ENCODE measurements at regions of chr18 and their contacts with region 1.

Region 1: GRCh38 chr18:62522504-62523254 is at the start of gene ZCCHC2:
- DNase-seq: peak; percentile 88 to 96
- H3K4me3 ChIP-seq: peak within 1 kb of the TSS; percentile 95
- H3K27ac ChIP-seq: peak within 1 kb of the TSS; percentile 53
- H3K4me1 ChIP-seq: peaks cover 30% of the 10 kb centered on the region
- H3K27me3 ChIP-seq: no peaks in the 10 kb centered on the region
- CTCF ChIP-seq: no peak
- total RNA-seq, gene ZCCHC2: 12.0 and 18.1 TPM in 2 replicates

Region 2: GRCh38 chr18:62152844-62153243 is 369.8 kb before region 1 on chr18:
- CTCF ChIA-PET with region 1: no interaction called
- POLR2A ChIA-PET with region 1: no interaction called
- intact Hi-C with region 1: no loop called
- DNase-seq: no peak
- H3K4me3 ChIP-seq: no peak overlapping the region
- H3K27ac ChIP-seq: no peak overlapping the region
- H3K4me1 ChIP-seq: no peaks in the 10 kb centered on the region
- H3K27me3 ChIP-seq: no peaks in the 10 kb centered on the region
- CTCF ChIP-seq: no peak

Region 3: DNA sequence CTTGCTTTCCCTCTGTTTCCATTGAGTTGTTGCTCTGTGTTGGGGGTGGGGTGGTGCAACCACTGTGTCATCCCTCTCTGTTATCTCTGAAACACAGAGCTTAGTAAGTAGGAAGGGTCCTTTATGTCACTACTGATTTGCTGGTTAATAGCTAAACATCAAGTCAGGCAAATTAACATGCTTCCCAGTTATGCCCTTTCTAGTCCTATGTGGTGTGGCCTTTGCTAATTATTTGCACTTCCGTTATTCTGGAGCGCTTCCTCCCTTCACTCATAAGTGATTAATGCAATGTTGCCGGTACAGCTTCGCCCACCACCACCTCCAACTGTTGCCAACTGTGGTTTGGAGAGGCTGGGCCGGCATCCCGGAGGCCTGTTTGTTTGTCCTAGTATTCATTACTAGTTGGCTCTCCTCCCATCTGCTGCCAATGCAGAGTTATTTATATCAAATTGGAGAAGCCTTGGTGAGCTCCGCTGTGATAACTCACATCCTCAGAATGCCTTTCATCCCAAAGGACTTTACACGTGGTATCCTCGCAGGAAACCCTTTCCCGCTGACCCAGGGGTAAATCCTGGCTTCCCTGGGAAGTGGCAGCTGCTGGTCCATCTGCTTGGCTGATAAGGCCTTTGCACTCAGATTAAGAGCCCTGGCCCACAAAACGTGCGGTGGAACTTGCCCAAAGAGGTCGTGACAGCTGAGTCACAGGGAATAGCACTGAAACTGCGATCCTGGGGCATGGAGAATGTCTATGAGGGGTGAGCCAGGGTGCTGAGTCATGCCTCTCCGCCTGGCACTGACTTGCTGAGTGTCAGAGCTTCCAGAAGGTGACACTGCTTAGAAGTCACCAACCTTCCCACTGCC is 71.9 kb before region 1 on chr18:
- CTCF ChIA-PET with region 1: interaction called, 4 read pairs
- POLR2A ChIA-PET with region 1: no interaction called
- intact Hi-C with region 1: loop called (anchors 2 kb)
- DNase-seq: peak; percentile 75 to 95
- H3K4me3 ChIP-seq: no peak overlapping the region; the same call in 1 of the 2 replicates
- H3K27ac ChIP-seq: peak overlapping the region; percentile 92
- H3K4me1 ChIP-seq: peaks cover 48% of the 10 kb centered on the region
- H3K27me3 ChIP-seq: no peaks in the 10 kb centered on the region
- CTCF ChIP-seq: no peak

Region 4: DNA sequence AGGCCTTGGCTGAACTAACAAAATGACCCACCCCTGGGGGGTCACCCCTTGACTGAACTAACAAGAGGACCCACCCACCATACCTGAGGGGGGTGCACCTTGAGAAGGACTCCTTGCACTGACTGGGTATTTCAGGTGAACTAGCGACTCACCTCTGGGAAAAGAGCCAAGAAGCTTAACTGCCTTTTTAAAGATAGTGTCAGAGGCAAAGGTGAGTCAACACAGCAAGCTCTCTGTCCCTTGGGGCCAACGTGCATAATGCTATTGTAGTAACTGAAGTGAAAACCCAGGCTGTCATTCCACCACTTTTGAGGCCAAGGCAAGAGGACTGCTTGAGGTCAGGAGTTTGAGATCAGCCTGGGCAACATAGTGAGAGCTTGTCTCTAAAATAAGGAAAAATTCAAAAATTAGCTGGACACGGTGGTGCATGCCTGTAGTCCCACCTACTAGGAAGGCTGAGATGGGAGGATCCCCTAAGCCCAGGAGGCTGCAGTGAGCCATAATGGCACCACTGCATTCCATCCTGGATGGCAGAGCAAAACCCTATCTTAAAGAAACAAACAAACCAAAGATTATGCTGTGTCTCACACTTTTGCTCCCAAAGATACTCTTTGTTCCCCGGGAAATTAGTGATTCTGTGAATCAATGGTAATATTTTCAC is 36.2 kb before region 1 on chr18:
- CTCF ChIA-PET with region 1: no interaction called
- POLR2A ChIA-PET with region 1: interaction called, 3 read pairs
- intact Hi-C with region 1: loop called (anchors 5 kb)
- DNase-seq: peak; percentile 53 to 96
- H3K4me3 ChIP-seq: peak overlapping the region; percentile 37; the same call in 1 of the 2 replicates
- H3K27ac ChIP-seq: peak overlapping the region; percentile 95
- H3K4me1 ChIP-seq: peaks cover 25% of the 10 kb centered on the region
- H3K27me3 ChIP-seq: no peaks in the 10 kb centered on the region
- CTCF ChIP-seq: no peak

Region 5: GRCh38 chr18:62499263-62499650 is 23.4 kb before region 1 on chr18:
- CTCF ChIA-PET with region 1: no interaction called
- POLR2A ChIA-PET with region 1: interaction called, 25 read pairs
- intact Hi-C with region 1: no loop called
- DNase-seq: no peak
- H3K4me3 ChIP-seq: no peak overlapping the region
- H3K27ac ChIP-seq: no peak overlapping the region
- H3K4me1 ChIP-seq: no peaks in the 10 kb centered on the region
- H3K27me3 ChIP-seq: no peaks in the 10 kb centered on the region
- CTCF ChIP-seq: no peak

Region 6: DNA sequence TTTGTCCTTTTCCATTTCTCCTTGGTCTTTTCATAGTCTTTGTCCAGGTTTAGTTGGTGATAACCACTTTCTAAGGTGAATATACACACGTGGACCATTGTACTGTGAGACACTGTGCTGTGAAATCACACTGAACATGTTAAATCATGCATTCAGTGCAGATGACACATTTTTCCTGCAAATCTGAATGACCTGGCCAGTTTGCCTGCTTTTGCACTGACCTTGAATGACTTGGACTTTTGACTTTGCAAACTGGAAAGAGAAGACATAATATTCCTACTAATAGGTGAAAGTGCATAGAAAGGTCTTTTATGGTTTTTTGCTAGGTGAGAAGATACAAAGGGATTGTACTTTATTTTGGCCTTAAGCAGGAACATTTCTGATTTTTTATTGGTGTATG is 171.0 kb after region 1 on chr18:
- CTCF ChIA-PET with region 1: no interaction called
- POLR2A ChIA-PET with region 1: no interaction called
- intact Hi-C with region 1: no loop called
- DNase-seq: no peak
- H3K4me3 ChIP-seq: no peak overlapping the region
- H3K27ac ChIP-seq: no peak overlapping the region
- H3K4me1 ChIP-seq: peaks cover 10% of the 10 kb centered on the region
- H3K27me3 ChIP-seq: no peaks in the 10 kb centered on the region
- CTCF ChIP-seq: no peak

Region 7: DNA sequence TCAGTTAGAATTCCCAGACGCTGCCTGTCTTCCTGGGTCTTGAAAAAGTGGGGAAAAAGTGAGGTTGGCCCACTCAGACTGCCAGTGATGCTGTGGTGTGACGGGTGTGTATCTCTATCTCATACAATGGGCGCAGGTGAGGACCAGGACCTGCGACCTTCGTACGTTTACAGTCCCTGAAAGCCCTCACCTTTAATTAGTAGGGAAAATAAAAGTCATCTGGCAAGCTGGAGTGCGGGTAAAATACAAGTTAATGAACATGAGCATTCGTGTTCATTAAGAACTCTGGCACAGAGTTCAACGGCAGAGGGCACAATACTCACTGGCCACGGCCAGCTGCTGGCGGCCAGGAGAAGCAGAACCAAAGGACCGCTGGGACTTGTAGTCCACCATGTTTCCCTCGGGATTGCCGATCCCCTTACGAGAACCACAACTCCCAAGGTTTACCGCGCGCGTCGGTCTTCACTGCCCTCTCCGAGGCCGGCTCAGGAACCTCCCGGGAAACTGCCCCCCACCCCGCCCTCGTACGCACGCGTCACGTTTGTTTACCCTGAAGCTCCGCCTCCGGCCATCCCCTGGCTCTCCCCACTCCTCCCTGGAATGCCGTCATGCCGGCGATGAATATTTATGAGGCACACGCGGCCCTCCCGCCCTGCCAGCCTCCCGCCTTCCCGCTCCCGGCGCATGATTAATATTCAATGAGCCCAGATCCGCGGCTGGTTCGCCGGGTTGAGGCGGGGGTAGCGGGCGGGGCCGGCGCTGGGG is 192.2 kb after region 1 on chr18:
- CTCF ChIA-PET with region 1: no interaction called
- POLR2A ChIA-PET with region 1: no interaction called
- intact Hi-C with region 1: no loop called
- DNase-seq: peak; percentile 96 to 98
- H3K4me3 ChIP-seq: peak overlapping the region; percentile 60; the same call in 1 of the 2 replicates
- H3K27ac ChIP-seq: peak overlapping the region; percentile 28; the same call in 1 of the 2 replicates
- H3K4me1 ChIP-seq: peaks cover 16% of the 10 kb centered on the region
- H3K27me3 ChIP-seq: no peaks in the 10 kb centered on the region
- CTCF ChIP-seq: peak; percentile 67

Measured in PC-9 (cell line).